ENCODE measurements at regions of chr2 and their contacts with region 1.

Region 1: DNA sequence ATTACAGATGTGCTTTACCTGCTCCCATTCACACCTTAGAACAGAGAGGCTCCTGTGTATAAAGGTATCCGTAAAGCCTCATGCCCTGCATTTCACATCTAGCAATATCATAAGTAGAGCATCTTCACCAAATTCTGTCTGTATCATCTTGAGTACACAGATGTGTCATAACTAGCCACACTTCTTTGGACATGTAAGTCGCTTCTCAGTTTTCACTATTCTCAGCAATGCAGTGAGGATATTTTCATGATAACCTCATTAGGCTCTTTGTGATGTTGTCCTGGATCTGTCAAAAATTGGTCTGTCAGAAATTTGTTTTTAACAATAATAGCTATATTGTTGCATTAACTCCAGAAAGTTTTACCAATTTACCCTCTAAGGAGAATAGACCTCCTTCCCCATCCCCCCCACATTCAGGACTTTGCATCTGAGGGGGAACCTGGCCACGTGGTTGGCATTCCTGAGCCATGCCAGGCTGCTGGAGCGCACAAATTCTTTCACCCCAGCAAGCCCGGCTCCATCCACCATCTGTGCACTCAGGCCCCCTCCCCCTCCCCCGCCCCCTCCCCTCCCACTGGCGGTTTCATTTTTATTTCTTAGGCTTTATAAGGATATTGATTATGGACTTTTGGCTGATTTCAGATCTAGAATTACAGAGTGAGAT is 34.1 kb downstream of the AGAP1 start:
- DNase-seq: no peak
- H3K4me3 ChIP-seq: no peak overlapping the region
- H3K27ac ChIP-seq: no peak overlapping the region
- H3K4me1 ChIP-seq: no peaks in the 10 kb centered on the region
- H3K27me3 ChIP-seq: no peaks in the 10 kb centered on the region
- CTCF ChIP-seq: no peak

Region 2: DNA sequence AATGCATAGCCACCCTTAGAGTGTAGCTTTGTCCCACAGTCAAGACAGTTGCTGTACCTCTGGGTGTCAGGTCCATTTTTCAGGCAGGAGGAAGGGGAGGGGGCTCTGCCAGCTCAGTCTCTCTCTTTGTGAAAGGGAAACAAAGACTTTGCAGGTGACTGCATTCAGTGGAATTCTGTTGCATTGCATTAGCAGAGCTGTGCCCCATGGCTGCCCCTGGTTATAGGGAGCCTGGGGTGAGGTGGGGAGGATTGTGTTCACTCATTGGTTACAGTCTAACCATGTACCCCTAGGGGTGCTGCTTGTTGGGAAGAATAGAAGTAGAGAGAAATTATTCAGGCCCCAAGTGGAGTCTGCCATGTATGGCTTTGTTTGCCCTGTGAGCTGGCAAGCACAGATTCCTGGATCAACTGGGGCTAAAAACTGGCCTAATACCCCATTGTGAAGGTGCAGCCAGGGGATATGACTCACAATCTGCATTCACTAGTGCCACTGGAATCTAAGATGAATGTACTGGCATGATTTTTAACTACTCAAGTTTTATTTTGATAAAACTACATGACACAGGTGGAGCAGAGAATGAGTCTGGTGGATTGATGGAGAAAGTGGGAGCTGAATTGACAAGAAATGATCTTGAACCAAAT is 457.8 kb before region 1 on chr2:
- CTCF ChIA-PET with region 1: no interaction called
- POLR2A ChIA-PET with region 1: no interaction called
- intact Hi-C with region 1: no loop called
- DNase-seq: peak; percentile 72 to 84
- H3K4me3 ChIP-seq: no peak overlapping the region
- H3K27ac ChIP-seq: peak overlapping the region; percentile 16
- H3K4me1 ChIP-seq: peaks cover 16% of the 10 kb centered on the region
- H3K27me3 ChIP-seq: no peaks in the 10 kb centered on the region
- CTCF ChIP-seq: no peak

Region 3: GRCh38 chr2:235390103-235390812 is 137.7 kb before region 1 on chr2:
- CTCF ChIA-PET with region 1: no interaction called
- POLR2A ChIA-PET with region 1: no interaction called
- intact Hi-C with region 1: no loop called
- DNase-seq: peak in 1 of 2 experiments; percentile 67
- H3K4me3 ChIP-seq: no peak overlapping the region
- H3K27ac ChIP-seq: no peak overlapping the region
- H3K4me1 ChIP-seq: peaks cover 27% of the 10 kb centered on the region
- H3K27me3 ChIP-seq: no peaks in the 10 kb centered on the region
- CTCF ChIP-seq: no peak

Region 4: DNA sequence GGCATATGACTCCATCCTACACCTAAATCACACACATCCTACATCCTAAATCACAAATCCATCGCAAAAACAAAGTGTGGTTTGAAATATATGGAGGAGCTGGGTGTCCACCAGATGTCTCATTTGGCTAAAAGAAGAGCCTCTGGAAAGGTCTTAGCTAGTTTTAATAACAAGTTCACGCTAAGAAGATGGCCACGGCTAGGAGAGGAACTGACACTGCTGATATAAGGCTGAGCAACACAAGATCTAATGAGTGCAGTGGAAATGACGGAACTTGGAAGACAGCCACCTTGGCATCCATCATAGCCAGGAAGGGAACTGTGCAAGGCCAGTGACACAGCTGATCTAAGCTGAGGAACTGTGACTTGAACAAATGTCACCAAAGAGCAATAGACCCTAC is 94.1 kb before region 1 on chr2:
- CTCF ChIA-PET with region 1: no interaction called
- POLR2A ChIA-PET with region 1: interaction called, 11 read pairs
- intact Hi-C with region 1: no loop called
- DNase-seq: no peak
- H3K4me3 ChIP-seq: no peak overlapping the region
- H3K27ac ChIP-seq: no peak overlapping the region
- H3K4me1 ChIP-seq: no peaks in the 10 kb centered on the region
- H3K27me3 ChIP-seq: no peaks in the 10 kb centered on the region
- CTCF ChIP-seq: no peak

Region 5: DNA sequence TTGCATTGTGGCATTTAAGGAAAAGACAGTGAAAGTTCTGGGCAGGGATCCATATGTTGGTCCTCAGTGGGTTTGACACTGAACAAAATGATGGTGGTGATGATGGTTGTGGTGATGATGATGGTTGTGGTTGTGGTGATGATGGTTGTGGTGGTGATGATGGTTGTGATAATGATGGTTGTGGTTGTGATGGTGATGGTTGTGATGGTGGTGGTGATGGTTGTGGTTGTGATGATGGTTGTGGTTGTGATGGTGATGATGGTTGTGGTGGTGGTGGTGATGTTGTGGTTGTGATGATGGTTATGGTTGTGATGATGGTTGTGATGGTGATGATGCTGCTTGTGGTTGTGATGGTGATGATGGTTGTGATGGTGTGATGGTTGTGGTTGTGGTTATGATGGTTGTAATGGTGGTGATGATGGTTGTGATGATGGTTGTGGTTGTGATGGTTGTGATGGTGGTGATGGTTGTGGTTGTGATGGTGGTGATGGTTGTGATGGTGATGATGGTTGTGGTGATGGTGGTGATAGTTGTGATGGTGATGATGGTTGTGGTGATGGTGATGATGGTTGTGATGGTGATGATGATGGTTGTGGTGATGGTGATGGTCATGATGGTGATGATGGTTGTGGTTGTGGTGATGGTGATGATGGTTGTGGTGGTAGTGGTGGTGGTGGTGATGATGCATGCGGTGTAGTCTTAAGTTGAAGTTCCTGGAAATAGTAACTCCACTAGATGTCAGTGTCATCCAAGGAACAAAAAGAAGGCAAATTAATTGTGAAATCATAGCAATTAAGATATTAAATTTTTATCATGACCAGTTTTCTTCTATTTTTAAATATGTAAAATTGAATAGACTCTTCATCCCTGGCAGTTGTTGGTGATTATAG is 274.8 kb after region 1 on chr2:
- CTCF ChIA-PET with region 1: no interaction called
- POLR2A ChIA-PET with region 1: no interaction called
- intact Hi-C with region 1: no loop called
- DNase-seq: no peak
- H3K4me3 ChIP-seq: no peak overlapping the region
- H3K27ac ChIP-seq: no peak overlapping the region
- H3K4me1 ChIP-seq: no peaks in the 10 kb centered on the region
- H3K27me3 ChIP-seq: no peaks in the 10 kb centered on the region
- CTCF ChIP-seq: peak; percentile 49; the same call in 1 of the 2 replicates

Region 6: DNA sequence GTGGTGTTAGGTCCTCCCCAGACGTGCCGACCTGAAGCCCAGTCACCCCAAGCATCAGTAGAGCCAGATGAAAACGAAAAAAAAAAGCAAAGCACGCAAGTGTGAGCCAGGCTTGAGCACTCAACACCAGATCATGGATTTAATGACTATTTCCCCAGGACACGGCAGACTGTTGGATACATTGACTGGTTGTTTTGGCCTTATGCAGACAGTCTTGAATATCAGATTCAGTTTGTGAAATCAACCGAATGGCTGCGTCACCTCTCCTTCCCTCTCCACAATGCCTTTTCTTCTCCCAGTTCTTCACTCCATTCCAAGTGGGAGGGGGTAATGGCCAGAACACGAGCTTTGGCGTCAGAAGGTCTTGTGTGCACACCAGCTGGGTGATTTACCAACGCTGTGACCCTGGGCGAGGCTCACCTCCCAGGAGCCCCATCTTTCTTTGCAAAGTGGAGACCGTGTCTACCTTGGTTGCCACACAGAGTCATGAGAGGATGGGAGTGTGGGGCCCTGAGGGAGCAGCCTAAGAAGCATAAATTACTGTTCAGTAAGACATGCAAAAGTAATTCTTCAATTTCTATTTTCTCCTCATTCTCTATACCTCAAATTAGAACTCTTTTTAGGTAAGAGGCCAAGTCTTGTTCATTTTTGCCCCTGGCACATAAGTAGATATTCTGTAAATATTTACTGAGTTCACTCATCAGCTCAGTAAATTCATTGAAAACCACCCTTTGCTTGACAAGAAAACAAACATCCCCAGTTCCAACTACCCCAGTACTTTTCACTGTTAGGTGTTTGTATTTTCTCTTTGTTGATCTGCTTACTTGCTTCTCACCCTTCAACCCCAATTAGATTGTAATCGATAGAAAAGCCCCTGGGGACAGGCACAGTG is 1376.7 kb after region 1 on chr2:
- CTCF ChIA-PET with region 1: no interaction called
- POLR2A ChIA-PET with region 1: no interaction called
- intact Hi-C with region 1: no loop called
- DNase-seq: no peak
- H3K4me3 ChIP-seq: no peak overlapping the region
- H3K27ac ChIP-seq: no peak overlapping the region
- H3K4me1 ChIP-seq: 0 out of 2 replicates have a peak, but pooled peaks cover 9% of the 10 kb centered on the region
- H3K27me3 ChIP-seq: peaks cover 89% of the 10 kb centered on the region
- CTCF ChIP-seq: no peak

Measured in PC-9 (cell line).